GM10248 (cell line): ENCODE measurements at regions of chr4 and their contacts with region 1.

Region 1: GRCh38 chr4:139030614-139031235 is 15.1 kb downstream of the NOCT start:
- DNase-seq: peak; percentile 73
- CTCF ChIP-seq: peak; percentile 82

Region 2: DNA sequence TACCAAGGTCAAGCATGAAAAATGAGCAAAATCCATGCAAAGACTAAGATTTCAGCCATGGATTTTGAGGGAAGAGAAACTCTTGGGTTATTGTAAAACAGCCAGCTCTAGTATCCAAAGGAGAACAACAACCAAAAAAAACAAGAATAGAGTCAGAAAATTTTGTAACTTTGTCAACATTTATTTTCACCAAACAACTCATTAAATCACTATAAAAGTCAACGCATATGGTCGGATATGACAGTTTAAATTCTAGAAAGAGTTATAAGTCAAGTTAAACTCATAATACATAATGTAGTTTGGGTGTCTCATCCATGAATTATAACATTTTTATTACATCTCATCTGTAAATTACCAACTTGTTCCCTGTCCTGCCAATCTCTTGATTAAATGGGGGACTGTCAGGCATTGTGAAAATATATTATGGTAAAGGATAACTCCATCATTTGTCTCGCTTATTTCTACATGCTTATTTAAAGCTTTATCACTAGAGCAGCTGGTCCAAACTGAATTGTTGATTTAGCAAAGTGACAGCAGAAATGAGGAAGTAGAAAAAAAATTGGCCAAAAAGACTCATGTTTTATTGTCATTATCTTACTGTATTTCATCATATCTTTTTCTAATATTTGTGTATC is 239.9 kb before region 1 on chr4:
- CTCF ChIA-PET with region 1: no interaction called
- POLR2A ChIA-PET with region 1: no interaction called
- DNase-seq: no peak
- CTCF ChIP-seq: no peak

Region 3: DNA sequence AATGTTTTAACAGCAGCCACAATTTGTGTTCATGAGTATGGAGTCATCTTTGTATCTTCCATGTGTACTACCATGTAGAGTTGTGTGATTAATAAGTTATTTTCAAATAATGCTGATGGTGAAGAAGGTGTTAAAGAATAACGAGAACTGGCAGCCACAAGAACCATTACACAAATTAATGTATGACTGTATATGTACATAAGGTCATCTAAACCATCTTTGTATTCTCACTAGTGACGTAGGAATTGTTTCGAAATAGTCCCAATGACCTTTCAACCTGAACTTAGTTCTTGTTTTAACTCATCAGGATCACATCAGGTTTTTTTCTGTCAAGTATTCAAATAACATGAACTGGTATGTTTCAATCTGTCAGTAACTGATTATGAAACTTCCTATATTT is 63.4 kb before region 1 on chr4:
- CTCF ChIA-PET with region 1: no interaction called
- POLR2A ChIA-PET with region 1: no interaction called
- DNase-seq: peak; percentile 54
- CTCF ChIP-seq: no peak

Region 4: GRCh38 chr4:139042981-139043460 is 12.3 kb after region 1 on chr4:
- CTCF ChIA-PET with region 1: interaction called, 88 read pairs
- POLR2A ChIA-PET with region 1: no interaction called
- DNase-seq: no peak
- CTCF ChIP-seq: no peak

Region 5: DNA sequence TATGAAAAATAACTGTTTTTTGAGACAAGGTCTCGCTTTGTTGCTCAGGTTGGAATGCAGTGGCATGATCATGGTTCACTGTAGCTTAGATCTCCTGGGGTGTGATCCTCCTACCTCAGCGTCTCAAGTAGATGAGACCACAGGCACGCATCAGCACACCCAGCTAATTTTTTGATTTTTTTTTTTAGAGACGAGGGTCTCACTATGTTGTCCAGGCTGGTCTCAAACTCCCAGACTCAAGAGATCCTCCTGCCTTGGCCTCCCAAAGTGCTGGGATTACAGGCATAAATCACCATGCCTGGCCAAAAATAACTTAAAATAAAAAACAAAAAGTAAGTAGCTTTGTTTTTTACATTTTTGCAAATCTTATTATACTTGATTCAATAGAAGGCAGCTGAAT is 48.2 kb after region 1 on chr4:
- CTCF ChIA-PET with region 1: interaction called, 11 read pairs
- POLR2A ChIA-PET with region 1: no interaction called
- DNase-seq: no peak
- CTCF ChIP-seq: no peak

Region 6: DNA sequence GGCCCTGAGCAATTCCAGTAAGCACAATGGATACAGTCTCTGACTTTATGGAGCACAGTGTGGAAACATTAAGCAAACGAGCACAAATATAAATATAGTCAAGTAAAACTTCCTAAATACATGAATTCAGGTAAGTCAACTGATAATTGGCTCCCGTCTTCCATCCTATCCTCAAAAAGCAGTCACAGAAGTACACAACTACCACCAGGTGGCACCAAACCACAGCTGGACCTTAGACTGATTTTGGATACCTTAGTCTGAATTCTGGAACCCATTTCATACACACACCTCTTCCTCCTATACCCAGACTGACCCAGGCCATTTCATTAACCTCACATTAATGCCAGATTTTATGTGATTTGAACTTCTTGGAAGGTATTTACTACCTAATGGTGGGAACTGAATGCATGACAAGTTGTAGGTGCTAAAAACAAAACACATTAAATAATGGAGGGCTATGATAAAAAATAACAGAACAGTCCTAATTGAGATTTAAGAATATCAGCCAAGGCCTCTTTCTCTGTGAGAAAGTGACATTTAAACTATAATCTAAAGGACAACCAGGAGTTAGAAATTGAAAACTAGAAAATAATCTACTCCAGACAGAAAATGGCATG is 68.7 kb after region 1 on chr4:
- CTCF ChIA-PET with region 1: interaction called, 12 read pairs
- POLR2A ChIA-PET with region 1: no interaction called
- DNase-seq: peak; percentile 75
- CTCF ChIP-seq: peak; percentile 77

Region 7: GRCh38 chr4:139223682-139224317 is 193.1 kb after region 1 on chr4:
- CTCF ChIA-PET with region 1: interaction called, 12 read pairs
- POLR2A ChIA-PET with region 1: no interaction called
- DNase-seq: no peak
- CTCF ChIP-seq: no peak

Region 8: GRCh38 chr4:139530833-139531427 is 500.2 kb after region 1 on chr4:
- CTCF ChIA-PET with region 1: interaction called, 14 read pairs
- POLR2A ChIA-PET with region 1: interaction called, 6 read pairs
- DNase-seq: peak; percentile 74
- CTCF ChIP-seq: peak; percentile 60